PC-3 (cell line): ENCODE measurements at regions of chr21 and their contacts with region 1.

Region 1: DNA sequence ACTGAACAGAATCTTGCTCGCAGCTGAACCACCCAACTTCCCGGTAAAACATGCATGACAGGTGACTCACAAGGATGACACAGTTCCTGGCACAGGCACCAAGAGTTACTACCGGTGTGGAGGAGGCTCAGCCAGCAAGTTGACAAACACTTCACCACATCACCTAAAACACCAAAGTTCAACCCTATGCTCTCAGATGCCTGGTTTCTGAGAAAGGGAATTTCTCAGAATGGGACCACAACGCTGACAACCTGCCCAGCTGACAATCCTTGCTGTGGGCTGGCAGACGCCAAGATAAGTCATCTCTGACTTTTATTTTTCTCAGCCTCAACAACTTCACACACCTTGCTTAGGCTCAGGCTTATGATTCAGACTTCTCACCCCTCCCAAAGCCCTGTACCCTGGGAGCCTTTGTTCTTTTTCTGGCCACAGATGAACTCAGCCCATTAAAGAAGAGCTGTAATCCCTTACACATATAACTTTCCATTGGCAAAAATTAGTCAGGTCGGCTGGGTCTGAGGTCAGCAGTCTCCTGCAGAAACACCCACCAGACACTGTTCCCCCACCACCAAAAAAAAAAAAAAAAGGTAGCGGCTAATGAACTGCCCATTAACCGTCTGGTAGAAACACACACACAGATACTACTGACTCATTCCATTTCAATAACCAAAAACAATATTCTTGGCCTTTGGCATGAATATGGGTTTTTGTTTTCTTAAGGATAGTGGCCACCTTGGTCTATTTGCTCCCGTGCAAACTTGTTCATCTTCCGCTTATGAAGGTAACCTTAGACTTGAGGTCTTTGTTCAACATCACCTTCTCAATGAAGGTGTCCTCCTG is 10.8 kb upstream of the TIAM1 start:
- DNase-seq: peak; percentile 99
- ATAC-seq: peak; percentile 75
- H3K4me3 ChIP-seq: no peak overlapping the region; the same call in 1 of the 2 replicates
- H3K27ac ChIP-seq: peak overlapping the region; percentile 94
- H3K4me1 ChIP-seq: peaks cover 49% of the 10 kb centered on the region
- H3K27me3 ChIP-seq: no peaks in the 10 kb centered on the region
- CTCF ChIP-seq: no peak

Region 2: DNA sequence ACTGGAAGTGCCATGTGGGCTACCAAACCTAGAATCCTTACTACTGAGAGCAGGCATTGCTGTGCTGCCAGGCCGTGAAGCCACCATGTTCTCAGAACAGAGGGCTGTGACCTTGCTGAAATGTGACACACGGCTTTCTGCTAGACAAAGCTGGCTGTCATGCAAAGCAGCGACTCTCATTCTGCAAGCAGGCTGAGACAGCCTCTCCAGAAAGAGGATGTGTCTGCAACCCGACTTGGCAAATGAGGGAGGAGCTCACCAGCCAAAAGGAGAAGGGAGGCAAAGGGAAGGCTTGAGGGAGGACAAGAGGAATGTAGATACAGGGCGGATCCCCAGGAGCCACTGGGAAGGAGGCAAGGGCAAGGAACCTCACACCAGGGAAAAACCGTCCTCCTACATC is 230.8 kb before region 1 on chr21:
- CTCF ChIA-PET with region 1: no interaction called
- POLR2A ChIA-PET with region 1: interaction called, 18 read pairs
- intact Hi-C with region 1: no loop called
- DNase-seq: no peak
- ATAC-seq: no peak
- H3K4me3 ChIP-seq: no peak overlapping the region
- H3K27ac ChIP-seq: no peak overlapping the region
- H3K4me1 ChIP-seq: no peaks in the 10 kb centered on the region
- H3K27me3 ChIP-seq: no peaks in the 10 kb centered on the region
- CTCF ChIP-seq: no peak

Region 3: DNA sequence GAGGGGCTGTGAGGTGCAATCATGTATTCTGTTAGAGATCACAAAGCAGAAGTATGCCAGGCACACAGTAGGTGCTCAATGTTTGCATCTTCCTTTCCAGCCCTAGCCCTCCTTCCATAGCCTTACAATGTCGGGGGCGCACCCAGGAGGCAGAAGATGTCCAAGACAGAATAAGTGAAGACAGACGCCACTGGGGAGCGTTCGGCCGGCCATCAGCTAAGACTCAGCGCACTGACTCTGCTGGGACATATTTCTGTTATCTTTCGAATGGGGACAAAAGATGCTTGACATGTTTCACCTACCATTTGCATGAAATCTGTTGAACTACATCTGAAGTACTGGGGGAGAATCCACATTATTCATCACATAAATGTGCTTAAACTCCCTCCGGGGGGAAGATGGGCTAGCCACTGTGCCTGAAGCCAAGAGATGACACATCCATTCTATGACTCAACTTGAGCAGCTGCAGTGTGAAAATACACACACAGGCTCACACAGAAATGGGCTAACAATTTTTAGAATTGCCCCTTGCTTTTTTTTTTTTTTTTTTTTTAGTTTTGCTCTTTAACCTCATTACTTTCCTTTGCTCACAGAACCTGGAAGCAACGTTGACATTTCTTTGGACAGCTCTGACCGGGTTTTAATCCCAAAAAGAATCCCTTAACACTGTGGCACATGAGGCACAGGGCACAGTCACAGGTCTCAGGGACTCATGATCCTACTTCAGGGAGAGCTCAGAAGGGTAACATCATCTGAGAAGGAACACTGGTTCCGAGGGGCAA is 18.7 kb before region 1 on chr21:
- CTCF ChIA-PET with region 1: interaction called, 18 read pairs
- POLR2A ChIA-PET with region 1: no interaction called
- intact Hi-C with region 1: no loop called
- DNase-seq: peak; percentile 96
- ATAC-seq: peak; percentile 96
- H3K4me3 ChIP-seq: peak overlapping the region; percentile 26; the same call in 1 of the 2 replicates
- H3K27ac ChIP-seq: peak overlapping the region; percentile 78
- H3K4me1 ChIP-seq: peaks cover 16% of the 10 kb centered on the region
- H3K27me3 ChIP-seq: no peaks in the 10 kb centered on the region
- CTCF ChIP-seq: no peak

Region 4: DNA sequence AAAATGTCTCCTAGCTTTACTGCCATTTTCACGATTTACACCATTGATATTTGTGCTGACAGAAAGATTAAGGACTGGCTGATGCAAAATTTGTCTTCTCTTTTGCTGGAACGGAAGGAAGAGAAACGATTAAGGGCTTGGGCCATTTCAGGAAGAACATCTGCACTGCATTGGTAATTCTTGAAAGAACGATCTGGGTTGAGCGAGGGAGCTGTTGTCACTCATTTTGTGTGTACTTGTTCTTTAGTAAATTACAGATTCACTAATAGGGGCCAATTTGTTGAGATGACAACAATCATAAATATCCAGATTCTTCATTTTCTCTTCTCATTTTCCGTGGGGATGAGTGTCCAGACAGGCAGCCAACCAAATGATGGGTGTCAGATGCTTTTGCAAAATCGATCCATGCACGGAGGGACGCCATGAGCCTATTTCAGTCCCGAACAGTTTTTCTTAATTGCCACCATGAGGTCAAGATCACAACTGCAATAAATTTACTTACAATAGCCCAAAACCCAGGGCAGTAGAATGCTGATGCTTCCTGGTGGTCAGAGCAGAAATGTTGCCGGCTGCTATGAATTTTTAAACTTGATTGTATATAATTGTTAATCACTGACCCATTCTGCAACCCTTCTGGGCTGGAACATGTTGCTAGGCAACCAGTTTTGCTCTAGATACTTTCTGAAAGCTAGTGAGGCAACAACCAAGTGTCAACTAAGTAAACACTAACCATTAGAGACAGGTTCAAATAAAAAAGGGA is 121.6 kb after region 1 on chr21:
- CTCF ChIA-PET with region 1: no interaction called
- POLR2A ChIA-PET with region 1: no interaction called
- intact Hi-C with region 1: loop called (anchors 10 kb)
- DNase-seq: no peak
- ATAC-seq: no peak
- H3K4me3 ChIP-seq: no peak overlapping the region
- H3K27ac ChIP-seq: no peak overlapping the region
- H3K4me1 ChIP-seq: no peaks in the 10 kb centered on the region
- H3K27me3 ChIP-seq: peaks cover 4% of the 10 kb centered on the region; the same call in 1 of the 2 replicates
- CTCF ChIP-seq: 0 out of 2 replicates have a peak, but pooled peaks have one; percentile 31

Region 5: DNA sequence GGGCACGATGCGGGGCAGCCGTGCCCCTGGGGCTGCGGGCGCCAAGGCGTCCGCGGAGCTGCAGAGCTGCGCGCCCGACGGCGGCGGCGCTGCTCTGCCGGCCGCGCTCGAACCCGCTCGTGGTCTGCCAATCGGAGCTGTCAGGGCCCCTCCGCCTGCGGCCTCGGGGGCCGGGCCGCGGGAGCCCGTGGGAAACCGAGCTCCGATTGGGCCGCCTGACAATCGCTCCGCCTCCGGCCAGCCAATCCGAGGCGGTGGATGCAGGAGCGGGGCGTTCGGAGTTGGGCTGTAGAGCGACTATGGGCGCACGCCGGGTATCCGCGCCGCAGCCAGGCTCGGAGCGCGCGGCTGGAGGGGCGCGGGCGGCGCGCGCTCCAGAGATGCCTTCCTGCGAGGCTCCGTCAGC is 204.1 kb after region 1 on chr21:
- CTCF ChIA-PET with region 1: no interaction called
- POLR2A ChIA-PET with region 1: no interaction called
- intact Hi-C with region 1: loop called (anchors 2 kb)
- DNase-seq: peak; percentile 92
- ATAC-seq: peak; percentile 90
- H3K4me3 ChIP-seq: peak overlapping the region; percentile 78
- H3K27ac ChIP-seq: no peak overlapping the region
- H3K4me1 ChIP-seq: peaks cover 14% of the 10 kb centered on the region
- H3K27me3 ChIP-seq: no peaks in the 10 kb centered on the region
- CTCF ChIP-seq: no peak; the same call in 1 of the 2 replicates